Tibial artery (tissue), 4 donors: ENCODE measurements at regions of chr9 and their contacts with region 1.

Region 1: GRCh38 chr9:69149321-69149807 is 24.7 kb upstream of the TJP2 start:
- DNase-seq: no peak
- H3K4me3 ChIP-seq: peak overlapping the region; percentile 16 to 22
- H3K27ac ChIP-seq: peak overlapping the region; percentile 61 to 65
- H3K4me1 ChIP-seq: peaks cover 0 to 24% (median 7%) of the 10 kb centered on the region in 4 donors
- H3K27me3 ChIP-seq: no peaks in the 10 kb centered on the region
- CTCF ChIP-seq: peak; percentile 62 to 65

Region 2: GRCh38 chr9:69056191-69056815 is 93.1 kb before region 1 on chr9:
- intact Hi-C with region 1: loop called (anchors 10 kb)
- DNase-seq: no peak
- H3K4me3 ChIP-seq: no peak overlapping the region
- H3K27ac ChIP-seq: no peak overlapping the region
- H3K4me1 ChIP-seq: peaks cover 0 to 17% (median 3%) of the 10 kb centered on the region in 4 donors
- H3K27me3 ChIP-seq: no peaks in the 10 kb centered on the region
- CTCF ChIP-seq: no peak

Region 3: GRCh38 chr9:69496846-69497450 is 347.6 kb after region 1 on chr9:
- intact Hi-C with region 1: no loop called
- DNase-seq: no peak
- H3K4me3 ChIP-seq: no peak overlapping the region
- H3K27ac ChIP-seq: no peak overlapping the region
- H3K4me1 ChIP-seq: no peaks in the 10 kb centered on the region
- H3K27me3 ChIP-seq: no peaks in the 10 kb centered on the region
- CTCF ChIP-seq: no peak